Panc1 (cell line): ENCODE measurements at regions of chr4 and their contacts with region 1.

Region 1: GRCh38 chr4:111666826-111667360 is 478.4 kb upstream of the FAM241A start:
- DNase-seq: no peak
- ATAC-seq: no peak
- H3K4me3 ChIP-seq: no peak overlapping the region
- H3K27ac ChIP-seq: no peak overlapping the region
- H3K4me1 ChIP-seq: no peaks in the 10 kb centered on the region
- H3K27me3 ChIP-seq: no peaks in the 10 kb centered on the region
- CTCF ChIP-seq: no peak

Region 2: DNA sequence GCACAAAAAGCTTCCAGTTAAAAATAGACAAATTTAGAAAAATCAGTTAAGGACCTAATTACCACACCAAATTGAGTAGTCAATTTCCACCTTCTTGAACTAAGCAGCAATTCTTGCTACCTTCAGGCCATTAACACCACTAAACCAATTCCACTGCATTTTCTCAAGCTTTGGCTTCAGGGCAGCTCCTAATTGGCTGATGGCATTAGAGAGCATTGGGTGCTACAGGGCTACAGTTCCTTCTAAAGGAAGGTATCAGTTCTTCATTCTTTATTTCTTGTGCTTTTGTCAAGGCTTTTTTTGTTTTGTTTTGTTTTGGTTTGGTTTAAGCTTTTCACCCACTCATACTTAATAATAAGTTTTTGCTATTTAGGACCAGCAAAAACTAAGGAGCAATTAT is 388.2 kb after region 1 on chr4:
- CTCF ChIA-PET with region 1: no interaction called
- POLR2A ChIA-PET with region 1: interaction called, 10 read pairs
- in situ Hi-C with region 1: no loop called
- intact Hi-C with region 1: no loop called
- DNase-seq: no peak
- ATAC-seq: no peak
- H3K4me3 ChIP-seq: no peak overlapping the region
- H3K27ac ChIP-seq: no peak overlapping the region
- H3K4me1 ChIP-seq: no peaks in the 10 kb centered on the region
- H3K27me3 ChIP-seq: no peaks in the 10 kb centered on the region
- CTCF ChIP-seq: no peak